ENCODE measurements at regions of chr14 and their contacts with region 1.

Region 1: DNA sequence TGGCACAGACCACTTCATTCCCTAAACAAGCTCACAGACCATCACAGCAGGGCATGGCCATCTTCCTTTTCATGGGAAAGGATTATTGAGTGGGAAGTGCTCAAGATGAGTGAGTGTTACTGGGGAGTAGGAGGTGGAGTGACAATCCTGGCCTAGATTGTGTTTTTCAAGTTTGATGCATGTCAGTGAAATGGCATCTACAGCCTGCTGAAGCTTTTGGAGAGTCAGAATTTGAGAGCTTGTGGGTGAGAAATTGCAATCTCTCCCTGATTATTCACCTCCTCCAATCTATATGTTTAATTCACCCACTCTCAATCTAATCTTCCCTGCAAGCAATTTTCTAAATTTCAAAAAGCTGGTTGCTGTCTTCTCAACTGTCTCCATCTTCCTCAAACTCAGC is 156.1 kb upstream of the G2E3 start:
- DNase-seq: no peak
- ATAC-seq: no peak
- H3K4me3 ChIP-seq: no peak overlapping the region
- H3K27ac ChIP-seq: no peak overlapping the region
- H3K4me1 ChIP-seq: no peaks in the 10 kb centered on the region
- H3K27me3 ChIP-seq: no peaks in the 10 kb centered on the region
- CTCF ChIP-seq: no peak
- POLR2A ChIP-seq: no peak

Region 2: GRCh38 chr14:29955087-29955486 is 447.8 kb before region 1 on chr14:
- intact Hi-C with region 1: loop called in 1 of 10 experiments (anchors 10 kb)
- DNase-seq: no peak
- ATAC-seq: no peak
- H3K4me3 ChIP-seq: no peak overlapping the region
- H3K27ac ChIP-seq: no peak overlapping the region
- H3K4me1 ChIP-seq: no peaks in the 10 kb centered on the region
- H3K27me3 ChIP-seq: no peaks in the 10 kb centered on the region
- CTCF ChIP-seq: no peak
- POLR2A ChIP-seq: no peak

Measured in heart left ventricle (tissue), 16 donors.